Ascending aorta (tissue), 2 donors: ENCODE measurements at regions of chr12 and their contacts with region 1.

Region 1: GRCh38 chr12:27243804-27244683 is at the start of gene STK38L:
- DNase-seq: peak; percentile 91 to 99
- H3K4me3 ChIP-seq: peak within 1 kb of the TSS; percentile 74 to 98
- H3K27ac ChIP-seq: peak within 1 kb of the TSS; percentile 96 to 98
- H3K4me1 ChIP-seq: peaks cover 0 to 4% of the 10 kb centered on the region in 2 donors
- H3K27me3 ChIP-seq: no peaks in the 10 kb centered on the region
- CTCF ChIP-seq: peak in 2 of 3 experiments; percentile 6 to 29
- total RNA-seq, gene STK38L: 137 TPM

Region 2: DNA sequence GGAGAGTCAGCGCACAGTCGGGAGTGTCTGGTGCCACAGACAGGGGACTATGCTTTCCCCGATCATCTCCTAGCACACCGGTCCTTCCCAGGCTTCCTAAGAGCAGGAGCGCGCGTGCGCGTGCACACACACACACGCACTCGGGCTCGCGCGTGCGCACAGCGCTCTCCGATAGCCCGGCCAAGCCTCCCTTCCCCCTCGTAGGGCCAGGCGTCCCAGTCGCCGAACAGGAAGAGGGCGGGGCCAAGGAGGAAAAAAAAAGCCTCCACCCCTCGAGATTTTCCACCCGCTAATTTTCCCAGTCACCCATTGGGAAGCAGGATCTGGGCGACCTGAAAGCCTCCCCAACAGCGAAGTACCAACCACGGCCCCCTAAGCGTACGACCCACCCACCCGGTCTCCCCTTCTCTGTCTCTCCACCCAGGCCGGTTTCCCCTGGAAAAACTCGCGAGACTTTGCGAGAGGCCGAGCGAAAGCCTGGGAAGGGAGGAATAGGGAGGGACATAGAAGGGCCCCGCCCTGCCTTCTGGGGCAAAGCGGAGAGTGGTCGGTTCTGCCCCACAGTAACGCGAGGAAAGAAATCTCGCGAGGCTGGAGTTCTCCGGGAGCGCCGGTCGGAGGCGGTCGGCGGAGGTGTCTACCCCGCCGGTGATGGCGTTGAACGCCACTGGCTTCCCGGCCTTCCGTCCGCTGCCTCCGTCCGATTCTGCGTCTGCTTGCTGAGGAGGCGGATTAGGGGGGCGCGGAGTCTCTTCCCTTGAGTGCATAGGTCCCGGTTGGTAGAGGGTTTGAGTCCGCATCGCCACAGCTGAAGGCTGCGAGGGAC is 306.0 kb before region 1 on chr12 and contains the starts of genes FGFR1OP2 and INTS13:
- intact Hi-C with region 1: loop called (anchors 5 kb)
- DNase-seq: peak; percentile 97 to 99
- H3K4me3 ChIP-seq: peak within 1 kb of the TSS; percentile 84 to 96
- H3K27ac ChIP-seq: peak within 1 kb of the TSS; percentile 88 to 99
- H3K4me1 ChIP-seq: peaks cover 4 to 37% of the 10 kb centered on the region in 2 donors
- H3K27me3 ChIP-seq: no peaks in the 10 kb centered on the region
- CTCF ChIP-seq: no peak
- total RNA-seq, gene FGFR1OP2: 34.3 TPM
- total RNA-seq, gene INTS13: 47.5 TPM

Region 3: GRCh38 chr12:27142101-27142721 is 101.8 kb before region 1 on chr12:
- intact Hi-C with region 1: loop called (anchors 2 kb)
- DNase-seq: peak in 1 of 2 donors; percentile 85
- H3K4me3 ChIP-seq: no peak overlapping the region
- H3K27ac ChIP-seq: no peak overlapping the region
- H3K4me1 ChIP-seq: peaks cover 0 to 15% of the 10 kb centered on the region in 2 donors
- H3K27me3 ChIP-seq: no peaks in the 10 kb centered on the region
- CTCF ChIP-seq: peak; percentile 63 to 83 (median 77)

Region 4: GRCh38 chr12:27193854-27194544 is 50.0 kb before region 1 on chr12:
- intact Hi-C with region 1: loop called (anchors 2 kb)
- DNase-seq: peak; percentile 59 to 93
- H3K4me3 ChIP-seq: no peak overlapping the region
- H3K27ac ChIP-seq: peak overlapping the region; percentile 92 to 95
- H3K4me1 ChIP-seq: peaks cover 14 to 71% of the 10 kb centered on the region in 2 donors
- H3K27me3 ChIP-seq: no peaks in the 10 kb centered on the region
- CTCF ChIP-seq: peak in 2 of 3 experiments; percentile 5 to 31

Region 5: GRCh38 chr12:27305673-27306456 is 61.8 kb after region 1 on chr12:
- intact Hi-C with region 1: loop called (anchors 2 kb)
- DNase-seq: no peak
- H3K4me3 ChIP-seq: no peak overlapping the region
- H3K27ac ChIP-seq: peak overlapping the region; percentile 46 to 49
- H3K4me1 ChIP-seq: peaks cover 3 to 14% of the 10 kb centered on the region in 2 donors
- H3K27me3 ChIP-seq: no peaks in the 10 kb centered on the region
- CTCF ChIP-seq: peak; percentile 41 to 53 (median 49)